ENCODE measurements at regions of chr15 and their contacts with region 1.

Region 1: DNA sequence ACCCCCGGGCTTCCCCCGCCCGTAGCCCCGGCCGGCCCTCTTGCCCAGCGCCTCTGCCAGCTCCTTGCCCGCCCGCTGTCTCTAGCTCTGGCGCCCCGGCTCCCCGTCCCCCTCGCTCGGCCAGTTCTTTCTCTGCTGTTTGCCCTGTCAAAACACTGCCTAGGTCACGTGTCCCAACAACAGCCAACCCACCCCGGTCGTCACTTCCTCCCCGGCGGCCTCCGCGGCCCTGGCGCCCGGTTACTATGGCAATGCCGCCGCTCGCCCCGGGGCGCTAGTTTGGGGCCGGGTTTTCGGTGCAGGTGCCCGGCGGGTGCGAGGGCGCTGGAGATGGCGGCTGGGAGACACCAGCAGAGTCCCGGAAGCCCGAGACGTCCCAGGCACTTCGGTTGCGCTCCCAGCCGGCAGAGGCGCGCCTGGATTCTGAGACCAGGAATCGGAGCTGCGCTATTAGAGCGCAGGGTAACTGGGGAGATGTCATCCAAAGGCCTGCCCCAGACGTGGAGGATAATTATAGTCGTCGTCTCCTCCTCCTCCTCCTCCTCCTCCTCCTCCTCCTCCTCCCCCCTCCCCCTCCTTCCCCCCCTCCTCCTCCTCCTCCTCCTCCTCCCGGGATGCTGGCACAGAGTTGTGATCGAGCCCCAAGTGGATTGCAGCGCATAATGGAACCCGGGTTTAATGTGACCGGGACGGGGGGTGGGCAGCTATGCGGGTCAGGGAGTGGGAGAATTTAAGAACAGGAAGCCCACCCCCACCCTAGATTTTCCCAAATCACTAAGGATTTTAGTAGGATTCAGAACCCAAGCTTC is at the start of gene ATOSA:
- DNase-seq: peak; percentile 73 to 96 (median 90)
- ATAC-seq: peak; percentile 74 to 86 (median 80)
- H3K4me3 ChIP-seq: peak within 1 kb of the TSS; percentile 83 to 89
- H3K4me3 Mint-ChIP-seq: peak within 1 kb of the TSS; percentile 91 to 99 (median 99)
- H3K27ac ChIP-seq: peak within 1 kb of the TSS; percentile 89
- H3K27ac Mint-ChIP-seq: peak within 1 kb of the TSS; percentile 99 to 100
- H3K4me1 ChIP-seq: peaks cover 12 to 44% of the 10 kb centered on the region in 2 experiments
- H3K4me1 Mint-ChIP-seq: peaks cover 51 to 66% (median 62%) of the 10 kb centered on the region in 3 donors
- H3K27me3 ChIP-seq: no peaks in the 10 kb centered on the region
- H3K27me3 Mint-ChIP-seq: no peaks in the 10 kb centered on the region
- total RNA-seq, gene ATOSA: 88.2 to 121 (median 96.1) TPM

Region 2: DNA sequence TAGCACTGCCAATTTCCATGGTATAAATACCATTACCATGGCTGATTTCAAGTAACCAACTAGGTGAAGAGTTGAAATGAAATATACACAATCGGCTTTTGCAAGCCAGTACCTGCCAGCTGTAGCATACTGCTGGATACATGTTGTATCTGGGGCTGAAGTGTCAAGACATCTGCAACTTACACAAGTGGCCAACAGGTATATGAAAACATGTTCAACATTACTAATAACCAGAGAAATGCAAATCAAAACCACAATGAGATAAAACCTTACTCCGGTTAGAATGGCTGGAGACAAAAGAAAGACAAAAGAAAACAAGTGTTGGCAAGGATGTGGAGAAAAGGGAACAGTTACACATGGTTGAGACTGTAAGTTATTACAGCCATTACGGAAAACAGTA is 11.8 kb before region 1 on chr15:
- CTCF ChIA-PET with region 1: interaction called in 1 of 2 experiments, 3 read pairs
- POLR2A ChIA-PET with region 1: interaction called, 6 to 14 read pairs
- DNase-seq: no peak
- ATAC-seq: no peak
- H3K4me3 ChIP-seq: no peak overlapping the region
- H3K4me3 Mint-ChIP-seq: no peak overlapping the region
- H3K27ac ChIP-seq: no peak overlapping the region
- H3K27ac Mint-ChIP-seq: no peak overlapping the region
- H3K4me1 ChIP-seq: no peaks in the 10 kb centered on the region
- H3K4me1 Mint-ChIP-seq: peaks cover 34 to 47% (median 40%) of the 10 kb centered on the region in 3 donors
- H3K27me3 ChIP-seq: no peaks in the 10 kb centered on the region
- H3K27me3 Mint-ChIP-seq: no peaks in the 10 kb centered on the region